WTC11 (cell line): ENCODE measurements at regions of chr7 and their contacts with region 1.

Region 1: DNA sequence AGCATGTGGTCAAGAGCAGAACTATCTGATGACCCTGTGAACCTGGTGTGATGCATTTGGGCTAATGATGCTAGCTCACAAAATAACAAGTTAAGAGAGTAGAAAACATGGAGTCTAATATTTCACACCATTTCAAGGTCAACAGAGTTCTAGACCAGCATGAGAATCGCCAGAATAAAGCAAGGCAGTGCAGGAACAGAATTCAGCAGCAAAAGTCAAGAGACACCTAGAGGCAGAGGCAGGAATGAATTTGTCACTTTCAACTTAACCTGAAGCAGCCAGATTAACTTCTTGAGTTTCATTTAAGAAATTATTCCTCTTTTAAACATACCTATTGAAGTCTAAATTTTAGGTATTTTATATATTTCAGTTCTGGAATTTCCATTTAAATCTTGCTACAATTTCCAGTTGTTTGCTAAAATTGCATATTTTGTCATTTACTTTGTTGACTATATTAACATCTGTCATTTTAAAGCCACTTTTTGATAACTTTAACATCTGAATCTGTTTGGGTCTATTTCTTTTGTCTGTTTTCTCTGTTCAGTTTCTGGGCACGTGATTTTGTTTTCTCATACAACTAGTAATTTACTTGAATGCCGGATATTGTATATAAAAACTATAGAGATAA is 44.2 kb upstream of the PRSS58 start:
- DNase-seq: no peak
- ATAC-seq: no peak
- H3K4me3 Mint-ChIP-seq: no peak overlapping the region
- H3K27ac Mint-ChIP-seq: no peak overlapping the region
- H3K4me1 Mint-ChIP-seq: peaks cover 29% of the 10 kb centered on the region
- H3K27me3 Mint-ChIP-seq: peaks cover 22% of the 10 kb centered on the region
- CTCF ChIP-seq: no peak

Region 2: GRCh38 chr7:142248166-142249160 is 53.6 kb before region 1 on chr7:
- CTCF ChIA-PET with region 1: interaction called, 17 read pairs
- POLR2A ChIA-PET with region 1: no interaction called
- DNase-seq: peak; percentile 25
- ATAC-seq: peak; percentile 86
- H3K4me3 Mint-ChIP-seq: no peak overlapping the region
- H3K27ac Mint-ChIP-seq: no peak overlapping the region
- H3K4me1 Mint-ChIP-seq: peaks cover 16% of the 10 kb centered on the region
- H3K27me3 Mint-ChIP-seq: no peaks in the 10 kb centered on the region; the same call in 1 of the 2 replicates
- CTCF ChIP-seq: no peak

Region 3: DNA sequence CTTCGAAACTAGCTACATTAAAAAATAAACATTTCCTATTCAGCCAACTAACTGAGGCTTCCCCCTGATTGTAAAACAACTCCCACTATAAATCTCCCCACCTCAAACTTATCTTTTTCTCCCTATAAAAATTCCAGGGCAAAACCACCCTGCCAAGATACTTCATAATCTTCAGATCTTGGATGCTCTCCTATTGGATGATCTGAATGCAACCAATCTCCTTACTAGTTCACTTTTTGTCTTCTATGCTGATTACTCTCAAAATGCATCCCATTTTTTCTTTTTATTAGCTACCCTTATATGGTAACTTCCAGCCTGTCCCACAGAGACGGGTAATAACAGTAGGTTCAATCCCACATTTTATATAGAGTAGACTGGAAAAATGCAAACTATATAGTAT is 29.2 kb before region 1 on chr7:
- CTCF ChIA-PET with region 1: interaction called, 12 read pairs
- POLR2A ChIA-PET with region 1: interaction called, 3 read pairs
- DNase-seq: no peak
- ATAC-seq: no peak
- H3K4me3 Mint-ChIP-seq: no peak overlapping the region
- H3K27ac Mint-ChIP-seq: no peak overlapping the region; the same call in 1 of the 2 replicates
- H3K4me1 Mint-ChIP-seq: peaks cover 10% of the 10 kb centered on the region
- H3K27me3 Mint-ChIP-seq: peaks cover 6% of the 10 kb centered on the region; the same call in 1 of the 2 replicates
- CTCF ChIP-seq: no peak

Region 4: GRCh38 chr7:142313528-142313927 is 11.5 kb after region 1 on chr7:
- CTCF ChIA-PET with region 1: interaction called, 85 read pairs
- POLR2A ChIA-PET with region 1: no interaction called
- DNase-seq: no peak
- ATAC-seq: no peak
- H3K4me3 Mint-ChIP-seq: no peak overlapping the region
- H3K27ac Mint-ChIP-seq: no peak overlapping the region
- H3K4me1 Mint-ChIP-seq: no peaks in the 10 kb centered on the region
- H3K27me3 Mint-ChIP-seq: peaks cover 6% of the 10 kb centered on the region
- CTCF ChIP-seq: no peak